RWPE1 (cell line): ENCODE measurements at regions of chr5 and their contacts with region 1.

Region 1: GRCh38 chr5:127875235-127876021 is 172.2 kb downstream of the CCDC192 start:
- DNase-seq: peak; percentile 64
- H3K27ac ChIP-seq: no peak overlapping the region
- CTCF ChIP-seq: peak; percentile 60

Region 2: GRCh38 chr5:127933348-127933747 is 57.9 kb after region 1 on chr5:
- CTCF ChIA-PET with region 1: no interaction called
- POLR2A ChIA-PET with region 1: no interaction called
- DNase-seq: no peak
- H3K27ac ChIP-seq: no peak overlapping the region
- CTCF ChIP-seq: no peak

Region 3: GRCh38 chr5:128201065-128201926 is 325.9 kb after region 1 on chr5:
- CTCF ChIA-PET with region 1: interaction called, 18 read pairs
- POLR2A ChIA-PET with region 1: no interaction called
- DNase-seq: peak; percentile 80
- H3K27ac ChIP-seq: no peak overlapping the region
- CTCF ChIP-seq: peak; percentile 97